ENCODE measurements at regions of chr22 and their contacts with region 1.

Region 1: DNA sequence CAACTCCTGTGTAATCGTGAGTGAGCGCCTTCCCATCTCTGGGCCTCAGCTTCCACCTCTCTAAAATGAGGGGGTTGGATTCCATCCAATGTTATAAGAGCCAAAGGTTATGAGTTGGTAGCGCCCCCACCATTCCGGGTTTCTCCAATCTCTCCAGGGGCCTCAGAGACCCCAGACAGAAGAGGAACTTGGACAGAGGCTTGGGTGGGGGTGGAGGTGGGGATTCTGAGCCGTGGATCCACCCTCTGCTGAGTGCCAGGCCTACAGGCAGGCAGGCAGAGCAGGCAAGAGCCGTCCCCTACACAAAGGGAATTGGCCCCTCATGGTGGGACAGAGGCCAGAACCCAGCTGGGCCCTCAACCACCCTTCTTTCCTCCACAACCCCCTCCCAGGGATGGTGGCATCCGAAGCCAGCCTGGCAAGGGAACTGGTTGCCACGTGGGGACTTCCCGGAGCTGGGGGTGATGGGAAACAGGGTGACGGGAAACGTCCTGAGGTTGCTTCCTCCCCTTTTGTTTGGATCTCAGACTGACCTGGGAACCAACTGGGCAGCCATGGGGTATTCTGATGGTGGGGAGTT is 31.8 kb downstream of the TXN2 start:
- DNase-seq: no peak
- H3K4me3 ChIP-seq: no peak overlapping the region
- H3K27ac ChIP-seq: no peak overlapping the region
- H3K4me1 ChIP-seq: peaks cover 31% of the 10 kb centered on the region
- H3K27me3 ChIP-seq: no peaks in the 10 kb centered on the region
- CTCF ChIP-seq: no peak

Region 2: DNA sequence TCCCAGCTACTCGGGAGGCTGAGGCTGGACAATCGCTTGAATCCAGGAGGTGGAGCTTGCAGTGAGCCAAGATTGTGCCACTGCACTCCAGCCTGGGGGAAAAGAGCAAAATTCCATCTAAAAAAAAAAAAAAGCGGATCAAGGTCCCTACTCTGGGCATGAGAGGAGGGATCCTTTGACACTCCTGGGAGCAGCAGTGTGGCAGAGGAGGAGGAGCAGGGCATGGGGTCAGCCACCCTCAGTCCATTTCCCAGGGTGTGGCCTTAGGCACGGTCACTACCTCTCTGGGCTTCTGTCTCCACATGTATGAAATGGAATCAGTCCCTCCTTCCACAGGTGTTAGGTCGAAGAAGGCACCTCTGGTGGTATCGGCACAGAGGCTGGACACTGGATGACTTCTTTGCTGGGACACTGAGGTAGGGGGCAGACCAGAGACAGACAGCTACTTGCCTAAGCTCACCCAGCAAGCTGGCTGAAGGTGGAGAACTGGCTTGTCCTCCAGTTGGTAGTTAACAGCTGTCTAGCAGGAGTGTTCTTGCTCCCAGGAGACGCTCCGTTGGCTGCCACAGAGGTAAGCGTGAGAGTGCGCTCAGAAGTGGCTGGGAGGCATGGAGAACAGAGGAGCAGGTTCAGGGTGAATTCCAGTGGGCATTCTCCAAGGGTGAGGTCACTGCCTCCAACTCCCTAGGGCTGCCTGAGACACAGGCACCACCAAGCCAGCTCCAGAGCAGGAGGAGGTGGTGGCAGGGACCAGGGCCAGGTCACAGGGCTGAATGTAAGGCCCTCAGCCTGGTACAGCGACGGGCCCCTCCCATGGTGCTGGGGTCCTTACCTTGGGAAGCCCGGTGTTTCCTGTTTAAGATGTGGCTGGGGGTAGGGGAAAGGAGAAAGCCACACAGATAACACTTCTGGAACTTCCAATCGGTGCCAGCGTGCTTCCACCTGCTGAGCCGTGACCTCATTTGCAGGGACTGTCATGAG is 12.3 kb after region 1 on chr22:
- CTCF ChIA-PET with region 1: no interaction called
- POLR2A ChIA-PET with region 1: interaction called, 4 read pairs
- intact Hi-C with region 1: loop called (anchors 2 kb)
- DNase-seq: peak; percentile 96 to 99
- H3K4me3 ChIP-seq: no peak overlapping the region
- H3K27ac ChIP-seq: peak overlapping the region; percentile 72
- H3K4me1 ChIP-seq: peaks cover 92% of the 10 kb centered on the region
- H3K27me3 ChIP-seq: no peaks in the 10 kb centered on the region
- CTCF ChIP-seq: no peak

Measured in PC-9 (cell line).